Activated CD4-positive, alpha-beta T cell treated with anti-CD3 and anti-CD28 coated beads for 36 hours (primary cell): ENCODE measurements at regions of chr2 and their contacts with region 1.

Region 1: GRCh38 chr2:237512774-237513466 is 25.9 kb downstream of the MLPH start:
- DNase-seq: peak; percentile 90
- ATAC-seq: peak; percentile 92
- H3K4me3 Mint-ChIP-seq: no peak overlapping the region
- H3K27ac Mint-ChIP-seq: no peak overlapping the region
- H3K4me1 Mint-ChIP-seq: no peaks in the 10 kb centered on the region
- H3K27me3 Mint-ChIP-seq: no peaks in the 10 kb centered on the region

Region 2: GRCh38 chr2:237421542-237422116 is 91.3 kb before region 1 on chr2:
- CTCF ChIA-PET with region 1: interaction called, 12 read pairs
- POLR2A ChIA-PET with region 1: no interaction called
- intact Hi-C with region 1: no loop called
- DNase-seq: peak; percentile 90
- ATAC-seq: peak; percentile 95
- H3K4me3 Mint-ChIP-seq: peak overlapping the region; percentile 50
- H3K27ac Mint-ChIP-seq: peak overlapping the region; percentile 83
- H3K4me1 Mint-ChIP-seq: peaks cover 45% of the 10 kb centered on the region
- H3K27me3 Mint-ChIP-seq: peaks cover 4% of the 10 kb centered on the region

Region 3: GRCh38 chr2:237533668-237534161 is 20.8 kb after region 1 on chr2:
- CTCF ChIA-PET with region 1: interaction called, 15 read pairs
- POLR2A ChIA-PET with region 1: no interaction called
- intact Hi-C with region 1: no loop called
- DNase-seq: no peak
- ATAC-seq: no peak
- H3K4me3 Mint-ChIP-seq: no peak overlapping the region
- H3K27ac Mint-ChIP-seq: no peak overlapping the region
- H3K4me1 Mint-ChIP-seq: no peaks in the 10 kb centered on the region
- H3K27me3 Mint-ChIP-seq: no peaks in the 10 kb centered on the region

Region 4: DNA sequence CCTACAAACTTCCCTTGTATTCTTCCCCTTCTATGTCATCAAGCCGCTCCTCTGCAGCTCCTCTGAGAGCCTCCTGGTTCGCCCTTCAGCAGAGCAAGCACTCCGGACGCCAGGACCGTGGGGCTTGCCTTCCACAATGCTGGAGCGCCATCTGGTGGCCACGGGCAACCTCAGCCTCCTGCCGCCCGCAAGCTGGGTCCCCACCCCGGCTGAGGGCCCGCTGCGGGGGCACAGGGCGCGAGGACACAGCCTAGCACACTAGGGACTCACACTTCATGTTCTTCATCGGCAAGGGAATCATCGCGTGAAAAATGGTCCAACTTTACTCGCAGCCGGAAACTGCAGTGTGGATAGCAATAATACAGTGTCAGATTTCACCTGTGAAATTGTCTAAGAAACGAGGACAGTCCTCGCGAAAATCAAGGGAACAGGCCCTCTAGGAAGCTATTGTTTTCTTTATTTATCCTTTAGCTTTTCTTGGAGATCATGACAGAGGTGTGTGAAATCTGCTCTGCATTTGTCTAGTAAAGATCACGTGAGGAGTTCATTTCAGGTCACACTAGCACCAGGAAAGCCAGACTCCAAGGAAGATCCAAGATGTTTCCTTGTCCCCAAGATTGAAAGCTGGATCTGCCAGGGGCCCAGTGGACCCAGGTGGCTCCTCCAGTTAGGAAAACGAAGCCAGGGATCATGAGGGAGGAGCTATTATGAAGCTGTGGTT is 59.3 kb after region 1 on chr2:
- CTCF ChIA-PET with region 1: interaction called, 233 read pairs
- POLR2A ChIA-PET with region 1: interaction called, 3 read pairs
- intact Hi-C with region 1: loop called (anchors 1 kb)
- DNase-seq: peak; percentile 95
- ATAC-seq: peak; percentile 99
- H3K4me3 Mint-ChIP-seq: no peak overlapping the region
- H3K27ac Mint-ChIP-seq: no peak overlapping the region
- H3K4me1 Mint-ChIP-seq: no peaks in the 10 kb centered on the region
- H3K27me3 Mint-ChIP-seq: no peaks in the 10 kb centered on the region

Region 5: DNA sequence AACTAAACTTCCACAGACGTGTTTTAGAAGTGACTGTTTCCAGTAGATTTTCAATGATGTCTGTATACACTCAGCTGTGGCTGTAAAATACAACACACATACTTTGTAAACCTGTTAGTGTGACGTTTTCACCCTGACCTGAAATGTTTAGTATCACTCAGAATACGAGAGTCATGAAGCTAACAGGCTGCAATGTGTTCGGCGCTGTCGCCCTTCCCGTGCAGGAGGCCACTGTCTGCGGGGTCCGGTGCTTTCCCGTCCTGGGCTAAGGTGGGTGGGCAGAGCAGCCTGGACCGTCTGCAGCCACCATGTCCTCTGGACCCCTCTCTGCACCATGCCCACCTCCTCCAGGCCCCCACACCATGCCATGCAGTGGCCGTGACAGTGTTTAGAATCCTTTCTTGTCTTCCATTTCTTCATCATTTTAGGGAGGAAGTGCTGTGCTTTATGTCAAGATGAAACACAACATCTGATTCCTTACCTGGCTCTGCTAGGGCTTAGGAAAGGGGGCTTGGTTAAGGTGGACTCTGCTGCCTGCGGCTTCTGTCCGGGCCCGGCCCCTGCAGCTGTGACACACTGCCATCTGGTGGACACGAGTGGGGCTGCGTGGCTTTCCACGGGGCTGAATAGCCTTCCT is 231.8 kb after region 1 on chr2:
- CTCF ChIA-PET with region 1: interaction called, 16 read pairs
- POLR2A ChIA-PET with region 1: no interaction called
- intact Hi-C with region 1: loop called (anchors 2 to 10 kb)
- DNase-seq: peak; percentile 84
- ATAC-seq: peak; percentile 85
- H3K4me3 Mint-ChIP-seq: no peak overlapping the region
- H3K27ac Mint-ChIP-seq: peak overlapping the region; percentile 63
- H3K4me1 Mint-ChIP-seq: peaks cover 35% of the 10 kb centered on the region
- H3K27me3 Mint-ChIP-seq: no peaks in the 10 kb centered on the region

Region 6: DNA sequence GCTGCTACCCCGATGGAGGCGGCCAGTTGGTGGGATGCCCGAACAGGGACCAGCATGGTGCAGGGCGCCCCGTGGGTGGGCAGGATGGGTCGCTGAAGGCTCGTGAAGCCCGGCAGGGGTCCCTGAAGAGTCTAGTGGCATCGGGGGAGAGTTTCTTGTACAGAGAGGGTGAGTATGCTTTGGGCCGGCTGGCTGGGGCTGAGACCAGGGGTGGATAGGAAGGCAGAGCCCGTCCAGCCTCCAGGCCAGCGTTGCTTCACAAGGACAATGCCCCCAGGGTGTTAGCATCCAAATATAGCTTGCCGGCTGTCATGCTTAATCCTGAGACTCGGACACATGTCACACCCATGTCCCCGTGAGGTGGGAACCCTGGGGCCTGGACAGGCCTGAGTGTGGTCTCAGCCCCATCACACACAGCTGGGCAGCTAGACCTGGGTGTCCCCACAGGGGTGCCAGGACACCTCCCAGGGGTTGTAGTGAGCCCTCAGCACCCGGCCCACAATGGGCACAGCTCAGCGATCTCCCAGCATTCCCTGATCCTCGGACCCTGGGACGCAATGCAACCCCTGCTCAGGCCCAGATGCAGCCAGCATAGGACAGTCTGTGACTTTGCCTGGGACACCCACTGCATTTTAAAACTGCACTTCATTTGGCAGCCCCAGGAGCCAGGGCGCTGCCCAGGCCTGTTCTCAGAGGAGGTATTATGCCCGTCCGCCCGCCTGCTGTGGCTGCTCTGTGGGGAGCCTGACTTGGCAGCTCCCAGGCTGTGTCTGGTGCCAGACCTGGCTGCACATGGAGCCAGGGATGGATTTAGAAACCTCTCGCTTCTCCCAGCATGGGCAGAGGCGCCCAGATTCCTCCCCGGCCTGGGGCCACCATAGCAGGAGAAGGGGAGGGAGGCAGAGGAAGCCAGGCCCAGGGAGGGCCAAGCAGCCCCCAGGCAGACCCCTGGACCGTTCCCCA is 382.9 kb after region 1 on chr2:
- CTCF ChIA-PET with region 1: no interaction called
- POLR2A ChIA-PET with region 1: no interaction called
- intact Hi-C with region 1: no loop called
- DNase-seq: no peak
- ATAC-seq: no peak
- H3K4me3 Mint-ChIP-seq: no peak overlapping the region
- H3K27ac Mint-ChIP-seq: no peak overlapping the region
- H3K4me1 Mint-ChIP-seq: peaks cover 27% of the 10 kb centered on the region
- H3K27me3 Mint-ChIP-seq: no peaks in the 10 kb centered on the region